ENCODE measurements at regions of chr6 and their contacts with region 1.

Region 1: GRCh38 chr6:26122793-26123674 is 35.8 kb downstream of the HFE start:
- DNase-seq: peak; percentile 73 to 99 (median 91)
- ATAC-seq: peak; percentile 54
- H3K4me3 ChIP-seq: peak overlapping the region; percentile 78 to 98
- H3K4me3 Mint-ChIP-seq: peak overlapping the region; percentile 94
- H3K27ac ChIP-seq: peak overlapping the region; percentile 87 to 94
- H3K27ac Mint-ChIP-seq: peak overlapping the region; percentile 99
- H3K4me1 ChIP-seq: peaks cover 20% of the 10 kb centered on the region
- H3K4me1 Mint-ChIP-seq: peaks cover 27% of the 10 kb centered on the region
- H3K27me3 ChIP-seq: no peaks in the 10 kb centered on the region
- H3K27me3 Mint-ChIP-seq: no peaks in the 10 kb centered on the region
- CTCF ChIP-seq: no peak

Region 2: GRCh38 chr6:26065952-26066380 is 57.1 kb before region 1 on chr6:
- CTCF ChIA-PET with region 1: interaction called, 7 read pairs
- POLR2A ChIA-PET with region 1: interaction called, 12 read pairs
- intact Hi-C with region 1: no loop called
- DNase-seq: peak in 7 of 9 experiments; percentile 32 to 86 (median 58)
- ATAC-seq: peak; percentile 95
- H3K4me3 ChIP-seq: no peak overlapping the region
- H3K4me3 Mint-ChIP-seq: no peak overlapping the region
- H3K27ac ChIP-seq: no peak overlapping the region
- H3K27ac Mint-ChIP-seq: no peak overlapping the region
- H3K4me1 ChIP-seq: peaks cover 6% of the 10 kb centered on the region
- H3K4me1 Mint-ChIP-seq: peaks cover 5% of the 10 kb centered on the region
- H3K27me3 ChIP-seq: no peaks in the 10 kb centered on the region
- H3K27me3 Mint-ChIP-seq: peaks cover 1% of the 10 kb centered on the region
- CTCF ChIP-seq: peak; percentile 95

Region 3: GRCh38 chr6:26141378-26141904 is 18.4 kb after region 1 on chr6:
- CTCF ChIA-PET with region 1: interaction called, 6 read pairs
- POLR2A ChIA-PET with region 1: interaction called, 40 read pairs
- intact Hi-C with region 1: no loop called
- DNase-seq: no peak
- ATAC-seq: no peak
- H3K4me3 ChIP-seq: no peak overlapping the region
- H3K4me3 Mint-ChIP-seq: no peak overlapping the region
- H3K27ac ChIP-seq: no peak overlapping the region
- H3K27ac Mint-ChIP-seq: no peak overlapping the region
- H3K4me1 ChIP-seq: no peaks in the 10 kb centered on the region
- H3K4me1 Mint-ChIP-seq: peaks cover 2% of the 10 kb centered on the region
- H3K27me3 ChIP-seq: no peaks in the 10 kb centered on the region
- H3K27me3 Mint-ChIP-seq: no peaks in the 10 kb centered on the region
- CTCF ChIP-seq: no peak

Region 4: GRCh38 chr6:26204332-26205165 is 81.5 kb after region 1 on chr6:
- CTCF ChIA-PET with region 1: interaction called, 5 read pairs
- POLR2A ChIA-PET with region 1: interaction called, 525 read pairs
- intact Hi-C with region 1: loop called (anchors 1 kb)
- DNase-seq: peak; percentile 75 to 98 (median 84)
- ATAC-seq: peak; percentile 74
- H3K4me3 ChIP-seq: peak overlapping the region; percentile 54 to 70
- H3K4me3 Mint-ChIP-seq: no peak overlapping the region
- H3K27ac ChIP-seq: peak overlapping the region; percentile 91
- H3K27ac Mint-ChIP-seq: no peak overlapping the region
- H3K4me1 ChIP-seq: peaks cover 31% of the 10 kb centered on the region
- H3K4me1 Mint-ChIP-seq: peaks cover 23% of the 10 kb centered on the region
- H3K27me3 ChIP-seq: no peaks in the 10 kb centered on the region
- H3K27me3 Mint-ChIP-seq: no peaks in the 10 kb centered on the region
- CTCF ChIP-seq: no peak

Region 5: DNA sequence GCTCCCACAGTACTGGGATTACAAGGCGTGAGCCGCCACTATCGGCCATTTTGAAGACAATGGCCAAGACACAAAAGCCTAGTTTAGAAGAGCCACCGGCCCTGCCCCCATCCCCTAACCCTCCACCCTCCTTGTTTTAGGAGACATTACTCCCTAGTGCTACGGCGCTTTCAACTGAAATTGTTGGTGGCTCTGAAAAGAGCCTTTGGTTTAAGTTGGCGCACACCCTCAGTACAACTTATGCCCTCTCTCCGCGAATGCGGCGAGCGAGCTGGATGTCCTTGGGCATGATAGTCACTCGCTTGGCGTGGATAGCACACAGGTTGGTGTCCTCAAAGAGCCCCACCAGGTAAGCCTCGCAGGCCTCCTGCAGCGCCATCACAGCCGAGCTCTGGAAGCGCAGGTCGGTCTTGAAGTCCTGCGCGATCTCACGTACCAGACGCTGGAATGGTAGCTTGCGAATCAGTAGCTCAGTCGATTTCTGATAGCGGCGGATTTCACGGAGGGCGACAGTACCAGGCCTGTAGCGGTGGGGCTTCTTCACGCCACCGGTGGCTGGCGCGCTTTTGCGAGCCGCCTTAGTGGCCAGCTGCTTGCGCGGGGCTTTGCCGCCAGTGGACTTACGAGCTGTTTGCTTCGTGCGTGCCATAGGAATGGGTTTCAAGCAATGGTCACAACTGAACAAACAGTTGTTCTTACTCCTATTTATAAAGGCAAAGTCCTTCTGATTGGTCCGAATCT is 127.1 kb after region 1 on chr6:
- CTCF ChIA-PET with region 1: interaction called, 4 read pairs
- POLR2A ChIA-PET with region 1: interaction called, 44 read pairs
- intact Hi-C with region 1: loop called in 1 of 2 experiments (anchors 1 kb)
- DNase-seq: peak; percentile 59 to 91 (median 79)
- ATAC-seq: peak; percentile 77
- H3K4me3 ChIP-seq: peak overlapping the region; percentile 74 to 80
- H3K4me3 Mint-ChIP-seq: peak overlapping the region; percentile 90
- H3K27ac ChIP-seq: peak overlapping the region; percentile 73 to 83
- H3K27ac Mint-ChIP-seq: peak overlapping the region; percentile 96
- H3K4me1 ChIP-seq: peaks cover 15% of the 10 kb centered on the region
- H3K4me1 Mint-ChIP-seq: peaks cover 40% of the 10 kb centered on the region
- H3K27me3 ChIP-seq: no peaks in the 10 kb centered on the region
- H3K27me3 Mint-ChIP-seq: no peaks in the 10 kb centered on the region
- CTCF ChIP-seq: peak; percentile 57

Region 6: GRCh38 chr6:27146706-27147505 is 1023.9 kb after region 1 on chr6:
- CTCF ChIA-PET with region 1: no interaction called
- POLR2A ChIA-PET with region 1: interaction called, 46 read pairs
- intact Hi-C with region 1: loop called in 1 of 2 experiments (anchors 5 kb)
- DNase-seq: peak; percentile 56 to 98 (median 74)
- ATAC-seq: peak; percentile 85
- H3K4me3 ChIP-seq: peak overlapping the region; percentile 71 to 77
- H3K4me3 Mint-ChIP-seq: no peak overlapping the region
- H3K27ac ChIP-seq: peak overlapping the region; percentile 84 to 91
- H3K27ac Mint-ChIP-seq: no peak overlapping the region
- H3K4me1 ChIP-seq: peaks cover 11% of the 10 kb centered on the region
- H3K4me1 Mint-ChIP-seq: peaks cover 13% of the 10 kb centered on the region
- H3K27me3 ChIP-seq: no peaks in the 10 kb centered on the region
- H3K27me3 Mint-ChIP-seq: no peaks in the 10 kb centered on the region
- CTCF ChIP-seq: no peak

Region 7: GRCh38 chr6:27864906-27865849 is 1742.1 kb after region 1 on chr6:
- CTCF ChIA-PET with region 1: no interaction called
- POLR2A ChIA-PET with region 1: interaction called, 27 read pairs
- intact Hi-C with region 1: loop called in 1 of 2 experiments (anchors 2 kb)
- DNase-seq: peak; percentile 37 to 97 (median 56)
- ATAC-seq: peak; percentile 83
- H3K4me3 ChIP-seq: peak overlapping the region; percentile 71 to 79
- H3K4me3 Mint-ChIP-seq: peak overlapping the region; percentile 95
- H3K27ac ChIP-seq: peak overlapping the region; percentile 67 to 83
- H3K27ac Mint-ChIP-seq: peak overlapping the region; percentile 94
- H3K4me1 ChIP-seq: peaks cover 17% of the 10 kb centered on the region
- H3K4me1 Mint-ChIP-seq: peaks cover 38% of the 10 kb centered on the region
- H3K27me3 ChIP-seq: no peaks in the 10 kb centered on the region
- H3K27me3 Mint-ChIP-seq: no peaks in the 10 kb centered on the region
- CTCF ChIP-seq: no peak

Measured in CD8-positive, alpha-beta T cell (primary cell).